CD4-positive, alpha-beta memory T cell (primary cell): ENCODE measurements at regions of chr6 and their contacts with region 1.

Region 1: GRCh38 chr6:108558372-108559096 is 2.2 kb upstream of the FOXO3 start:
- DNase-seq: peak; percentile 96 to 98 (median 98)
- H3K4me3 ChIP-seq: peak overlapping the region; percentile 98 to 99
- H3K4me3 Mint-ChIP-seq: peak overlapping the region; percentile 92 to 98 (median 98)
- H3K27ac ChIP-seq: peak overlapping the region; percentile 97
- H3K27ac Mint-ChIP-seq: peak overlapping the region; percentile 96 to 100 (median 99)
- H3K4me1 ChIP-seq: peaks cover 25% of the 10 kb centered on the region
- H3K4me1 Mint-ChIP-seq: peaks cover 14 to 28% (median 23%) of the 10 kb centered on the region in 4 donors
- H3K27me3 ChIP-seq: no peaks in the 10 kb centered on the region
- H3K27me3 Mint-ChIP-seq: no peaks in the 10 kb centered on the region

Region 2: GRCh38 chr6:108260809-108261569 is 297.5 kb before region 1 on chr6 and contains the start of gene SNX3:
- CTCF ChIA-PET with region 1: no interaction called
- POLR2A ChIA-PET with region 1: interaction called, 26 read pairs
- intact Hi-C with region 1: loop called (anchors 2 kb)
- DNase-seq: peak; percentile 90 to 94 (median 91)
- H3K4me3 ChIP-seq: peak within 1 kb of the TSS; percentile 93 to 98
- H3K4me3 Mint-ChIP-seq: peak within 1 kb of the TSS; percentile 86 to 97 (median 92)
- H3K27ac ChIP-seq: peak within 1 kb of the TSS; percentile 84
- H3K27ac Mint-ChIP-seq: peak within 1 kb of the TSS; percentile 89 to 97 (median 95)
- H3K4me1 ChIP-seq: peaks cover 43% of the 10 kb centered on the region
- H3K4me1 Mint-ChIP-seq: peaks cover 15 to 38% (median 27%) of the 10 kb centered on the region in 4 donors
- H3K27me3 ChIP-seq: no peaks in the 10 kb centered on the region
- H3K27me3 Mint-ChIP-seq: peaks cover 0 to 2% of the 10 kb centered on the region in 2 donors
- total RNA-seq, gene SNX3: 65.9 to 66.6 TPM

Region 3: DNA sequence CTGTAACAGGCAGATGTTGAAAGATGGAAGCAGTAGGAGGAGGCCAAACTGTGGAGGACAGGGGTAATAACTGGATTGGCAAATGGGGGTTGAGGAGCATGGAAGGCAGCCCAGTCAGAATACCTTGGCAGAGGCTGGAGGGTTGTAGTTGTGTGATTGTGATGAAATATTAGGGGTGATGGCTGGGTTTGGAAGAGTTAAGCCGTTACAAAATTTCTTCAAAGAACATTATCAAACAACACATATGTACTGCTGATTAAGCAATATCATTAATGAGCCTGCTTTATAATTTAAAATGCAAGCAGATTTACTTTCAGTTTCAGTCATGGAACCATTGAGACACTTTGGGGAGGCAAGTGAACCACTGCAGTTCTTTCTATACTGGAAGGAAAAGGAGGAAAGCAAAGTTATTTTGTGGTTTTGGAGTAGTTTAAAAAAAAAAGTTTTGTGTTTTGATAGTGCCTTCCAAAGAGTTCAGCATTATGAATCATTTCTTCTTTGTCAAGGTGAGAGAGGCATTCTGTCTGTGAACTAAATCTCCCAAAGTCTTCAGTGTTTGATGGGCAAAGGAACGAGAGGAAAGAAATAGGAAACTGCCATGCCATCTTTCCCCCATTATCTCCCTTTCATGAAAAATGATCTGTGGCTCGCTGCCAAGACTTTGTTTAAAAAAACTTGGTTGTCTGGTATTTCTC is 22.9 kb after region 1 on chr6:
- CTCF ChIA-PET with region 1: no interaction called
- POLR2A ChIA-PET with region 1: interaction called, 25 read pairs
- intact Hi-C with region 1: no loop called
- DNase-seq: peak in 2 of 5 donors; percentile 17 to 38
- H3K4me3 ChIP-seq: peak overlapping the region; percentile 1 to 17
- H3K4me3 Mint-ChIP-seq: peak overlapping the region; percentile 47 to 84 (median 78)
- H3K27ac ChIP-seq: no peak overlapping the region
- H3K27ac Mint-ChIP-seq: peak overlapping the region; percentile 73 to 94 (median 87)
- H3K4me1 ChIP-seq: peaks cover 66% of the 10 kb centered on the region
- H3K4me1 Mint-ChIP-seq: peaks cover 50 to 80% (median 66%) of the 10 kb centered on the region in 4 donors
- H3K27me3 ChIP-seq: no peaks in the 10 kb centered on the region
- H3K27me3 Mint-ChIP-seq: no peaks in the 10 kb centered on the region

Region 4: GRCh38 chr6:108782179-108783041 is 223.9 kb after region 1 on chr6:
- CTCF ChIA-PET with region 1: interaction called, 4 read pairs
- POLR2A ChIA-PET with region 1: interaction called, 5 read pairs
- intact Hi-C with region 1: loop called (anchors 1 kb)
- DNase-seq: peak; percentile 69 to 74 (median 72)
- H3K4me3 ChIP-seq: peak overlapping the region in 1 of 2 donors; percentile 40
- H3K4me3 Mint-ChIP-seq: peak overlapping the region; percentile 78 to 93 (median 87)
- H3K27ac ChIP-seq: no peak overlapping the region
- H3K27ac Mint-ChIP-seq: peak overlapping the region in 5 of 7 donors; percentile 24 to 78 (median 47)
- H3K4me1 ChIP-seq: peaks cover 5% of the 10 kb centered on the region
- H3K4me1 Mint-ChIP-seq: peaks cover 4 to 11% (median 7%) of the 10 kb centered on the region in 4 donors
- H3K27me3 ChIP-seq: no peaks in the 10 kb centered on the region
- H3K27me3 Mint-ChIP-seq: no peaks in the 10 kb centered on the region

Region 5: GRCh38 chr6:108874470-108875160 is 316.1 kb after region 1 on chr6:
- CTCF ChIA-PET with region 1: no interaction called
- POLR2A ChIA-PET with region 1: interaction called, 13 read pairs
- intact Hi-C with region 1: no loop called
- DNase-seq: peak; percentile 22 to 47 (median 29)
- H3K4me3 ChIP-seq: peak overlapping the region in 1 of 2 donors; percentile 16
- H3K4me3 Mint-ChIP-seq: peak overlapping the region; percentile 70 to 90 (median 77)
- H3K27ac ChIP-seq: peak overlapping the region; percentile 52
- H3K27ac Mint-ChIP-seq: peak overlapping the region; percentile 77 to 96 (median 90)
- H3K4me1 ChIP-seq: peaks cover 46% of the 10 kb centered on the region
- H3K4me1 Mint-ChIP-seq: peaks cover 34 to 54% (median 45%) of the 10 kb centered on the region in 4 donors
- H3K27me3 ChIP-seq: no peaks in the 10 kb centered on the region
- H3K27me3 Mint-ChIP-seq: no peaks in the 10 kb centered on the region

Region 6: DNA sequence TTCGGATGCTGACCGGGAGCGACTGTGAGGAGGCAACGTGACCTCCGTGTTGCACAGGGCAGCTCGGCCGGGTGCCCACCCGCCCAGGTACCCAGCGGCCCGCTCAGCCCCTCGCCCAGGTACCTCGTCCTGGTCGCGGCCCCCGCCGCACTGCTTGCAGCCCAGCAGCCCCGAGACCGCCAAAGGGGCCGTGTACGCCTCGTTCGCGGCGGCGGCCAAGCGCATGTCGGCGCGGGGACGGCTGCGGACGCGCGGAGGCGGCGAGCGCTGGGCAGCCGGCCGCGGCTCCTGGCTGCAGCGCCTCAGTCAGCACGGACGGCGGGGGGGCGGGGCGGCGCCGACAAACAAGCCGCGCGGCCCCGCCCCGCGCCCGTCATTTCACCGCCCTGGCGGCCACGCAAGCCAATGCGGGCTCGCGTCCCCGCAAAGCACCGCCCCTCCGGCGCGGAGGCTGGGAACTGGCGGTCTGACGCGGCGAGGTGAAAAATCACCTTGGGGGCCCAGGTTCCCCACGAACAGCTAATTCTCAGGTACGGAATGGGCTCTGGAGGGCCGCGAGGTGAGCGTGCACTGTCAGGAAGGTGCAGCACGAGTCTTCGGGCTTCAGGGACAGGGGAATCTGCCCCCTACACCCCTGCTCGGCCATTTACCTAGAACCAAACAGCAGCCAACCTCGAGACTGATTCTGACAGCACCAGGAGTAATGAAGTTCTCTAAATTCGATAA is 450.9 kb after region 1 on chr6:
- CTCF ChIA-PET with region 1: interaction called, 3 read pairs
- POLR2A ChIA-PET with region 1: interaction called, 32 read pairs
- intact Hi-C with region 1: loop called (anchors 2 kb)
- DNase-seq: peak; percentile 90 to 92 (median 90)
- H3K4me3 ChIP-seq: peak overlapping the region; percentile 77 to 86
- H3K4me3 Mint-ChIP-seq: peak overlapping the region; percentile 94 to 100 (median 98)
- H3K27ac ChIP-seq: peak overlapping the region; percentile 96
- H3K27ac Mint-ChIP-seq: peak overlapping the region; percentile 94 to 100 (median 100)
- H3K4me1 ChIP-seq: peaks cover 67% of the 10 kb centered on the region
- H3K4me1 Mint-ChIP-seq: peaks cover 47 to 81% (median 60%) of the 10 kb centered on the region in 4 donors
- H3K27me3 ChIP-seq: no peaks in the 10 kb centered on the region
- H3K27me3 Mint-ChIP-seq: no peaks in the 10 kb centered on the region

Region 7: DNA sequence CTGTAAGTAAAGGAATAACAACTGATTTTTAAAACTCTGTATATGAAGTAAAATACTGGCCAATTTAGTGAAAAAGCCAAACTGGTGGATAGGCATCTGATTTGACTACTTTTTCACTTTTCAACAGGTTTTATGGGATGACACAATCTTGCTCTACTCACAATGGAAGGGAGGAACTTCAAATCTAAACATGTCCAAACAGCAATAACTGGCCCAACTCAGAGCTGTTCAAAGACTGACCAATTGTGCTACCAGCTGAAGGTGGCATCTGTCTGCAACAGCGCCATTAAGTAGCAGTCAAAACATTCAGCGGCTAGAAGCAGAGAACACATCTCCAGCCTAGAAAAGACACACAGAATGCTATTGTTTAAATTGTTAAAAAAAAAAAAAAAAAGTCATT is 491.5 kb after region 1 on chr6:
- CTCF ChIA-PET with region 1: no interaction called
- POLR2A ChIA-PET with region 1: no interaction called
- intact Hi-C with region 1: no loop called
- DNase-seq: no peak
- H3K4me3 ChIP-seq: no peak overlapping the region
- H3K4me3 Mint-ChIP-seq: no peak overlapping the region
- H3K27ac ChIP-seq: no peak overlapping the region
- H3K27ac Mint-ChIP-seq: peak overlapping the region in 1 of 7 donors; percentile 50
- H3K4me1 ChIP-seq: peaks cover 24% of the 10 kb centered on the region
- H3K4me1 Mint-ChIP-seq: peaks cover 31 to 42% (median 33%) of the 10 kb centered on the region in 4 donors
- H3K27me3 ChIP-seq: no peaks in the 10 kb centered on the region
- H3K27me3 Mint-ChIP-seq: no peaks in the 10 kb centered on the region

Region 8: DNA sequence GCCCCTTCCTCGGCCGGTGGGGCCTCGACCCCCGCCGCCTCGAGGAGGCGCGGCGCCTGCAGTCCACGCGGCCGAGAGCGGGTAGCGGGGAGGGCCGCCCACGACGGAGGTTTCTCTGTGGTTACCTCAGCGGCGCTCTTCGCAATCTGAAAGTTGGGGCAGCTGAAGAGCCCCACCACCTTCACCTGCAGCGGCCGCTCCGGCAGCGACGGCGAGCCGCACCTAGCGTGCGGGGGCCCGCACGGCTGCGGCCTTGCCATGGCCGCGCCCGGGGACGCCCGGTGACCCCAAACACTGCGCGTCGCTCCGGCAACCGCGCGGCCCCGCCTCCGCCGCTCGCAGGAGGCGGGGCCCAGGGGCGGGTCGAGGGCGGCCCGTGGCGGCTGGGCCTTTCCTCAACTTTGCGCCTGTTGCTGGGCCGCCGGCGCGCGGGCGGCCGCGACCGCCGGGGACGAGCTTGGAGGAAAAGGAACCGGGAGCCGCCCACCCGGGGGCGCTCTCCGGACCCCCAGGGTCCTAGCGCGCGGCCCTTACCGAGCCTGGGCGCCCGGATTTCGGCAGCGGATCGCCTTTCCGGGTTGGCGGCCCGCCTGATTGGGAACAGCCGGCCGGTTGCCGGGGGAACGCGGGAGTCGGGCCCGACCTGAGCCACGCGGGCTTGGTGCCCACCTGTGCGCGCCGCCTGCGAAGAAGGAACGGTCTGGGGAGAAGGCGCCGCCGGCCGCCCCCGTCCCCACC is 882.0 kb after region 1 on chr6 and contains the starts of genes PPIL6 and SMPD2:
- CTCF ChIA-PET with region 1: no interaction called
- POLR2A ChIA-PET with region 1: interaction called, 15 read pairs
- intact Hi-C with region 1: loop called (anchors 1 kb)
- DNase-seq: peak; percentile 77 to 84 (median 80)
- H3K4me3 ChIP-seq: peak within 1 kb of the TSS; percentile 69 to 82
- H3K4me3 Mint-ChIP-seq: peak within 1 kb of the TSS; percentile 91 to 98 (median 94)
- H3K27ac ChIP-seq: peak within 1 kb of the TSS; percentile 89
- H3K27ac Mint-ChIP-seq: peak within 1 kb of the TSS; percentile 96 to 98 (median 97)
- H3K4me1 ChIP-seq: peaks cover 25% of the 10 kb centered on the region
- H3K4me1 Mint-ChIP-seq: peaks cover 15 to 32% (median 21%) of the 10 kb centered on the region in 4 donors
- H3K27me3 ChIP-seq: no peaks in the 10 kb centered on the region
- H3K27me3 Mint-ChIP-seq: no peaks in the 10 kb centered on the region
- total RNA-seq, gene PPIL6: 0.39 to 0.52 TPM
- total RNA-seq, gene SMPD2: 21.7 to 23.6 TPM